CD4-positive, alpha-beta memory T cell (primary cell): ENCODE measurements at regions of chr6 and their contacts with region 1.

Region 1: GRCh38 chr6:31888276-31889258 is 8.9 kb downstream of the EHMT2 start:
- DNase-seq: peak; percentile 34 to 41 (median 39)
- H3K4me3 ChIP-seq: no peak overlapping the region
- H3K4me3 Mint-ChIP-seq: no peak overlapping the region
- H3K27ac ChIP-seq: no peak overlapping the region
- H3K27ac Mint-ChIP-seq: peak overlapping the region in 1 of 7 donors; percentile 70
- H3K4me1 ChIP-seq: no peaks in the 10 kb centered on the region
- H3K4me1 Mint-ChIP-seq: peaks cover 1 to 6% (median 5%) of the 10 kb centered on the region in 4 donors
- H3K27me3 ChIP-seq: no peaks in the 10 kb centered on the region
- H3K27me3 Mint-ChIP-seq: no peaks in the 10 kb centered on the region

Region 2: GRCh38 chr6:31877125-31877650 is 11.4 kb before region 1 on chr6:
- CTCF ChIA-PET with region 1: interaction called, 18 read pairs
- POLR2A ChIA-PET with region 1: no interaction called
- intact Hi-C with region 1: no loop called
- DNase-seq: no peak
- H3K4me3 ChIP-seq: no peak overlapping the region
- H3K4me3 Mint-ChIP-seq: no peak overlapping the region
- H3K27ac ChIP-seq: no peak overlapping the region
- H3K27ac Mint-ChIP-seq: peak overlapping the region in 1 of 7 donors; percentile 36
- H3K4me1 ChIP-seq: no peaks in the 10 kb centered on the region
- H3K4me1 Mint-ChIP-seq: peaks cover 0 to 6% (median 2%) of the 10 kb centered on the region in 4 donors
- H3K27me3 ChIP-seq: no peaks in the 10 kb centered on the region
- H3K27me3 Mint-ChIP-seq: no peaks in the 10 kb centered on the region